GM18951 (cell line): ENCODE measurements at regions of chr1 and their contacts with region 1.

Region 1: GRCh38 chr1:119010201-119010600 is 22.1 kb upstream of the TBX15 start:
- POLR2A ChIP-seq: no peak

Region 2: DNA sequence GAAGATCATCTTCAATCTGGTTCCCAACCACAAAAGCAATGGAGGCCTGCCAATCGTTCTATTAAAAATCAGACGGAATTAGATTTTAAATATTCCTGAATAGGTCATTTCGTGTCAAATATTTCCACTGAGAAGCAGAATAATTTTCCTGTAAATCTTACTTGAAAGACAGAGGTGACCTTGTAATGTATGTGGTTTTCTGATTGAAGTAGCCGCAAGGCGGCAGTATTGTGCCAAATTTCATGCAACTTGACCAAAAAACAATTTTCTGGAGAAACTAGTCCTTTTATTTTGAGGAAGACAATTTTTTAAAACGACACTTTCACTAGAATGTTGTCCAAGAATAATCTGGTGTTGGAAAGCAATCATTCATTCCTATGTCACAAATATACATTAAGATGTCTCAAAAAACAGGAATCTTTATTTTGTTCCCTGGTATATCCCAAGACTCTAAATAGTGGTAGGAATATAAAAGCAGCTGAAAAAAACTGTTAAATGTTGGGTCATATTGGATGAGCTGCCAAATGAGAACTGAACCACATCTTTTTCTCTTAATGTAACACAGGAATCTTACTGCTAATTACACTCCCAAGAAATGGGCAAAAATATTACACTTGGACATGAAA is 858.8 kb before region 1 on chr1:
- in situ Hi-C with region 1: loop called (anchors 10 kb)
- POLR2A ChIP-seq: no peak

Region 3: DNA sequence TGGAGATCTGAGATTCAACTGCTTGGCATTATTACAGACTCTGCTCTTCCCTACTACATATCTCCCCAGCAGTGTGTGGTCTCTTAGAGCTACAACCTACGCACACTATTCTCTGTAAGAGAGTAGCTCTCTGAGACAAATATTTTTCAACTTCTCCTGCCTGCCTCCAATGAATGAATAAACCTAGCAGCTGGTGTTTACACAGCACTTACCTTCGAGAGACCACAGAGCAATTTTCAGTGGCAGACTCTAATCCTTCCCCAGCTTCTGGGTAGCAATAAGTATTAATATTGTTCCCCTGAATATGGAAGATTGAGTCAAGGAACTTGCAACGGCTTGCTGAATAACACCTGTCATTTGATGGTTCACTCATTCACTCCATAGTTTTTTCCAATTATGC is 474.3 kb before region 1 on chr1:
- in situ Hi-C with region 1: no loop called
- POLR2A ChIP-seq: no peak